Left ventricle myocardium inferior (tissue), 1 donor: ENCODE measurements at regions of chr21 and their contacts with region 1.

Region 1: DNA sequence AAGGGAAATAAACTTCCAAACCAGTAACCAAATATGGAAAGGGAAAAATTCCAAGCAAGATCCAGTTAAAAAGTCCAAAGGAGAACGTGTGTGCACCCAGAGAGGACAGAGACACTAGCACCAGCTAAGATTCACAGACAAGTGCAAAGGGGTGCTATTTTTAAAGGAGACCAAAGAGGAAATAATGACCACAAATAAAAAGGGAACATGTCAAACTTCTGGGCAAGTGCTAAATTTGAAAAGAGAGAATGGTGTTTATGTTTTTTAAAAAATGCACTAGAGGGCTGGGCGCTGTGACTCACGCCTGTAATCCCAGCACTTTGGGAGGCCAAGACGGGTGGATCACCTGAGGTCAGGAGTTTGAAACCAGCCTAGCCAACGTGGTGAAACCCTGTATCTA is 8.6 kb downstream of the JAM2 start:
- DNase-seq: no peak
- H3K4me3 ChIP-seq: no peak overlapping the region
- H3K27ac ChIP-seq: no peak overlapping the region
- H3K4me1 ChIP-seq: peaks cover 11% of the 10 kb centered on the region
- H3K27me3 ChIP-seq: no peaks in the 10 kb centered on the region
- CTCF ChIP-seq: no peak

Region 2: GRCh38 chr21:25464275-25464674 is 183.4 kb before region 1 on chr21:
- intact Hi-C with region 1: no loop called
- DNase-seq: no peak
- H3K4me3 ChIP-seq: no peak overlapping the region
- H3K27ac ChIP-seq: no peak overlapping the region
- H3K4me1 ChIP-seq: no peaks in the 10 kb centered on the region
- H3K27me3 ChIP-seq: no peaks in the 10 kb centered on the region
- CTCF ChIP-seq: no peak

Region 3: DNA sequence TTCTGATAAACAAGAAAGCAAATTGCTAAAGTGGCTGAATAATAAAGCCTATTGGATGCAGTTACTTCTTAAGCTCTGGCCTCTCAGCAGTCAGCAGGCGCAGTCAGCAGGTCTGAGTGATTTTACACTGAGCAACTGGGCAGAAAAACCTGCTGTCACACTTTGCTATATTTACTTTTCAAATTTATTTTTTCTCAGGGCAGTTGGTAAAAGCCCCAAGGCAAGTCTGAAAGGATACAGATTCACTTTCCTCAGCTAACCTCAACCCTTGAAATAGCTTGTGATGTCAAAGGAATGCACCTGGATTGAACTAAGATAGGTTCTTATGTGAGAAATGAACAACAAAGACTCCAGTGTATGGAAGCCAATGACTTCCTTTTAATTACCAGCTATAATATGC is 53.1 kb after region 1 on chr21:
- intact Hi-C with region 1: loop called (anchors 5 kb)
- DNase-seq: no peak
- H3K4me3 ChIP-seq: no peak overlapping the region
- H3K27ac ChIP-seq: peak overlapping the region; percentile 56
- H3K4me1 ChIP-seq: peaks cover 7% of the 10 kb centered on the region
- H3K27me3 ChIP-seq: no peaks in the 10 kb centered on the region
- CTCF ChIP-seq: no peak